Naive thymus-derived CD4-positive, alpha-beta T cell (primary cell): ENCODE measurements at regions of chr11 and their contacts with region 1.

Region 1: DNA sequence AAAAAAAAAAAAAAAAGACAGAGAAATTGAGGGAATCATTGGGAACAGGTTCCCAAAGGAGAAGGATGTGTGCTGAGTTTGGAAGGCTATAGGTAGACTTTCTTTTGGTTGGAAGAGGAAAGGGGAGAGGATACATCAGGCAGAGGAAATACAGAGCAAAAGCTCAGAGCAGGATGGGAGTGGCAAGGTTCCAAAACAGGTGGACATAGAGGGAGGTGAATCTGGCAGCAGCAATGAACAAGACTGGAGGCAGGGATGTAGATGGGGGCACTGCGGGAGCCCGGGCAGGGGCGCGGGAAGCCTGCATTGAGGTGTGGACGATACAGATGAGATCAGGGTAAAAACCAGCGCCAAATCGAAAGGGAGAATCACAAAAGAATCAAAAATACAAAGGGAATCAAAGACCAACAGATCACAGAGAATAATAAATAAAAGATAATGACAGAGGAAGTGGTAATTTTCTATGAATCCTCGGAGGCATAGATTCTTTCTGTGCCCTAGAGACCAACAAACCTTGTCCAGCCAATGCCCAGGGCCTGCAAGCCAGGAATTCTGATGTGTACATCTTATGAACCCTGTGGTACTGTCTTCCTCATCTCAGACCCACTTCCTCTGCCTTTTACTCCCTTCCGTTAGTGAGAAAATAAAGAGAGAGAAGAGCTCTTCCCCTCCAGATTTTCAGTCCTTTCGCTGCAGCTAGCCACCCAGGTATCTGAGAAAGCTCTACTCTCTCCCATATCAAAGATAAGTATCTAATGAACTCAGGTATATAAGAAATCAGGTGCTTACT is 70.3 kb downstream of the SLC1A2 start:
- DNase-seq: peak in 3 of 9 donors; percentile 13 to 27 (median 18)
- ATAC-seq: peak; percentile 50
- H3K4me3 ChIP-seq: no peak overlapping the region
- H3K4me3 Mint-ChIP-seq: peak overlapping the region; percentile 37 to 86 (median 76)
- H3K27ac ChIP-seq: peak overlapping the region; percentile 23
- H3K27ac Mint-ChIP-seq: peak overlapping the region; percentile 44 to 97 (median 92)
- H3K4me1 ChIP-seq: peaks cover 0 to 37% of the 10 kb centered on the region in 2 donors
- H3K4me1 Mint-ChIP-seq: peaks cover 34 to 69% (median 62%) of the 10 kb centered on the region in 7 donors
- H3K27me3 ChIP-seq: no peaks in the 10 kb centered on the region
- H3K27me3 Mint-ChIP-seq: no peaks in the 10 kb centered on the region

Region 2: DNA sequence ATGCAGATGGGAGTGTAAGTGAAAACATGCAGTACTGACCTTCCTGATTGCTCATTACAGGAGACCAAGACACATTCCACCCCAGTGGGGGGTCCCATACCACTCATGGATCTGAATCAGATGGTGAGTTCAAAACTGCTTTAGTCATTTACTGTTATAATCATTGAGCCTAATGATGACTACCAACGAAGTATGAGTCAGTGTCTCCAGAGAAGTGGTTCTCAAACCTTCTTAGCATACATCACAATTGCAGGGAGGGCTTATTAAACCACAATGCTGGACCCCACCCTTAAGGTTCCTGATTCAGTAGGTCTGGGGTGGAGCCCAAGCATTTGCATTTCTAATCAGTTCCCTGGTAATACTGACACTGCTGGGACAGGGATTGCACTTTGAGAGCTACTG is 134.3 kb before region 1 on chr11:
- CTCF ChIA-PET with region 1: no interaction called
- POLR2A ChIA-PET with region 1: no interaction called
- intact Hi-C with region 1: no loop called
- DNase-seq: no peak
- ATAC-seq: peak; percentile 71
- H3K4me3 ChIP-seq: no peak overlapping the region
- H3K4me3 Mint-ChIP-seq: peak overlapping the region in 7 of 10 donors; percentile 12 to 68 (median 44)
- H3K27ac ChIP-seq: peak overlapping the region; percentile 11
- H3K27ac Mint-ChIP-seq: peak overlapping the region; percentile 26 to 98 (median 92)
- H3K4me1 ChIP-seq: peaks cover 40 to 41% of the 10 kb centered on the region in 2 donors
- H3K4me1 Mint-ChIP-seq: peaks cover 41 to 97% (median 89%) of the 10 kb centered on the region in 7 donors
- H3K27me3 ChIP-seq: no peaks in the 10 kb centered on the region
- H3K27me3 Mint-ChIP-seq: no peaks in the 10 kb centered on the region

Region 3: GRCh38 chr11:35337136-35337918 is 11.8 kb before region 1 on chr11:
- CTCF ChIA-PET with region 1: interaction called, 3 read pairs
- POLR2A ChIA-PET with region 1: interaction called, 11 read pairs
- intact Hi-C with region 1: loop called in 1 of 2 experiments (anchors 1 kb)
- DNase-seq: no peak
- ATAC-seq: peak; percentile 70
- H3K4me3 ChIP-seq: no peak overlapping the region
- H3K4me3 Mint-ChIP-seq: no peak overlapping the region
- H3K27ac ChIP-seq: no peak overlapping the region
- H3K27ac Mint-ChIP-seq: no peak overlapping the region
- H3K4me1 ChIP-seq: peaks cover 6 to 14% of the 10 kb centered on the region in 2 donors
- H3K4me1 Mint-ChIP-seq: peaks cover 12 to 40% (median 28%) of the 10 kb centered on the region in 7 donors
- H3K27me3 ChIP-seq: no peaks in the 10 kb centered on the region
- H3K27me3 Mint-ChIP-seq: no peaks in the 10 kb centered on the region

Region 4: GRCh38 chr11:35376613-35377012 is 27.5 kb after region 1 on chr11:
- CTCF ChIA-PET with region 1: no interaction called
- POLR2A ChIA-PET with region 1: no interaction called
- intact Hi-C with region 1: no loop called
- DNase-seq: no peak
- ATAC-seq: no peak
- H3K4me3 ChIP-seq: no peak overlapping the region
- H3K4me3 Mint-ChIP-seq: no peak overlapping the region
- H3K27ac ChIP-seq: no peak overlapping the region
- H3K27ac Mint-ChIP-seq: no peak overlapping the region
- H3K4me1 ChIP-seq: no peaks in the 10 kb centered on the region
- H3K4me1 Mint-ChIP-seq: peaks cover 5 to 11% (median 9%) of the 10 kb centered on the region in 7 donors
- H3K27me3 ChIP-seq: no peaks in the 10 kb centered on the region
- H3K27me3 Mint-ChIP-seq: peaks cover 0 to 10% (median 0%) of the 10 kb centered on the region in 5 donors

Region 5: GRCh38 chr11:35391922-35392813 is 43.1 kb after region 1 on chr11:
- CTCF ChIA-PET with region 1: no interaction called
- POLR2A ChIA-PET with region 1: no interaction called
- intact Hi-C with region 1: no loop called
- DNase-seq: peak; percentile 70 to 93 (median 82)
- ATAC-seq: peak; percentile 93
- H3K4me3 ChIP-seq: no peak overlapping the region
- H3K4me3 Mint-ChIP-seq: peak overlapping the region; percentile 13 to 78 (median 63)
- H3K27ac ChIP-seq: no peak overlapping the region
- H3K27ac Mint-ChIP-seq: peak overlapping the region in 6 of 9 donors; percentile 25 to 86 (median 59)
- H3K4me1 ChIP-seq: peaks cover 0 to 17% of the 10 kb centered on the region in 2 donors
- H3K4me1 Mint-ChIP-seq: peaks cover 8 to 35% (median 30%) of the 10 kb centered on the region in 7 donors
- H3K27me3 ChIP-seq: no peaks in the 10 kb centered on the region
- H3K27me3 Mint-ChIP-seq: peaks cover 0 to 19% (median 0%) of the 10 kb centered on the region in 5 donors